GM18951 (cell line): ENCODE measurements at regions of chr7 and their contacts with region 1.

Region 1: GRCh38 chr7:119184124-119184788 is 959.8 kb downstream of the ANKRD7 start:
- POLR2A ChIP-seq: no peak

Region 2: DNA sequence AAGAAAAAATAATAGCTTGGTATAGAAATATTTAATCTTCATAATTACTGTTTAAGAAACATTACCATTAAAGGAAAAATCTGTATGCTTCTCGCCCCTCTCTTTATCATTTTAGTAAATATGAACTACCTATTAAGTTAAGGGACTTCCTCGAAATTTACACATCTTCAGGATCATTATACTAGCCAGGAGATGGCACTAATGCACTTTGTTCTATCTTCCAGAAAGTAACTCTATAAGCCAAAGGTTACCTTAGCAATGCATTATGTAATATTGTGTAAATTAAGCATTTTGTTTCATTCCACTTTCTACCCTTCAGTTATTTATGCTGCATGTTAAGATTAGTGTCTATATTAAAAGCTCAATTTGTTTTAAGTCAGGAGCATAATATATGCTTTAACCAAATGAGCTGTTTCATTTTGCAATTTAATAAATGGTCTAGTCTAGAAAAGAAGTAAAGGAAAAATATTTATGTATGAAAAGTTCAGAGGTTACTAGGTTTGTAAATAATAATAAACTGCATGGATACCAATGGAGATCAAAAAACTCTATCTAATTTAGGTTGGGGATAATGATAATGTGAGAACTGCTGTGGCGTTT is 831.3 kb before region 1 on chr7:
- in situ Hi-C with region 1: loop called (anchors 10 kb)
- POLR2A ChIP-seq: no peak